ENCODE measurements at regions of chr7 and their contacts with region 1.

Region 1: GRCh38 chr7:100705753-100706671 is at the start of gene POP7:
- DNase-seq: peak; percentile 98
- ATAC-seq: peak; percentile 91
- H3K4me3 ChIP-seq: peak within 1 kb of the TSS; percentile 96
- H3K27ac ChIP-seq: peak within 1 kb of the TSS; percentile 58
- H3K4me1 ChIP-seq: peaks cover 9% of the 10 kb centered on the region
- H3K27me3 ChIP-seq: no peaks in the 10 kb centered on the region
- CTCF ChIP-seq: no peak
- total RNA-seq, gene POP7: 151 and 154 TPM in 2 replicates

Region 2: DNA sequence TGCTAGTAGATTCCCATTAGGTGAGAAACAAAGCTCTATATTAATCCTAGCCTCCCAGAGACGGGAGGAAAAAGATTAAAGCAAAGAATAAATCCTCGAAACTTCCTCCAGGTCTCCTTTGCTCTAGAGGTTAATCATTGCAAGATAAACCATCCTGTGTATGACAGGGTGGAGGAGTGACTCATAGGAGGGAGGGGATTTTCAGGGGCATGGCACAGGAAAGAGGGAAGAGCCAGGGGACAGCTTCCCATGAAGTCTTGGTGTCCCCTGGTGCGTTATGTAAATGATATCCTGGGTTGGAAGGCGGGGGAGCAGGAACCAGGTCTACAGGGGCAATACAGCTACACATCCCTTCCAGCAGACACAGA is 1027.0 kb before region 1 on chr7:
- CTCF ChIA-PET with region 1: no interaction called
- POLR2A ChIA-PET with region 1: no interaction called
- intact Hi-C with region 1: no loop called
- DNase-seq: peak; percentile 75
- ATAC-seq: peak; percentile 99
- H3K4me3 ChIP-seq: no peak overlapping the region
- H3K27ac ChIP-seq: no peak overlapping the region
- H3K4me1 ChIP-seq: peaks cover 11% of the 10 kb centered on the region
- H3K27me3 ChIP-seq: no peaks in the 10 kb centered on the region
- CTCF ChIP-seq: no peak

Region 3: DNA sequence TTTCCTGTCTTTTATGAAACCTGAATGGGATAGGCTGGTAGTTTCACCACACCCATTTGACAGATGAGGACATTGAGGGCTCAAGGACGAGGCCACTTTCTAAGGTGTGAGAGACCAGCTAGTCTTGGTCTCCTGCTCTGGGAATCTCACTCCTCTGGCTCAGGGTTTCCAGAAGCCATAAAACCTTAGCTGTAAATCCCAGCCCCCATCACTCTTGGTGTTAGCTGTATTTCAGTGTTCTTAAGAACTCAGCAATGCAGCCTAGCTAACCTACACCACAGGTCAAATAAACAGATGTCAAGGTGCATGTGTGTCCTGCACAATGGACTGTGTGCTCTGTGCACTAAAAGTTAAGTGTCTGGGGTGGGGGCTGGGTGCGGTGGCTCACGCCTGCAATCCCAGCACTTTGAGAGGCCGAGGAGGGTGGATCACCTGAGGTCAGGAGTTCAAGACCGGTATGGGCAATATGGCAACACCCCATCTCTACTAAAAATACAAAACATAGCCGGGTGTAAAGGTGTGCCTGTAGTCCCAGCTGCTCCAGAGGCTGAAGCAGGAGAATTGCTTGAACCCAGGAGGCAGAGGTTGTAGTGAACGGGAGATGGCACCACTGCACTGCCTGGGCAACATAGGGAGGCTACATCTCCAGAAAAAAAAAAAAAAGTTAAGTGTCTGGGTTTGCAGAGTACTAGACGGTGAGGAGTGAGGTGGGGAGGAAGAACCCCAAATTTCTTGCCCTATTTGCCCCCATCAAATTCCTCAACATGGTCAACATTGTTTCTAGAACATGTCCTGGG is 13.7 kb after region 1 on chr7:
- CTCF ChIA-PET with region 1: interaction called, 39 read pairs
- POLR2A ChIA-PET with region 1: no interaction called
- intact Hi-C with region 1: no loop called
- DNase-seq: peak; percentile 16
- ATAC-seq: peak; percentile 45; the same call in 1 of the 2 replicates
- H3K4me3 ChIP-seq: no peak overlapping the region
- H3K27ac ChIP-seq: no peak overlapping the region
- H3K4me1 ChIP-seq: no peaks in the 10 kb centered on the region
- H3K27me3 ChIP-seq: no peaks in the 10 kb centered on the region
- CTCF ChIP-seq: peak; percentile 32

Region 4: GRCh38 chr7:100763556-100764140 is 57.6 kb after region 1 on chr7:
- CTCF ChIA-PET with region 1: interaction called, 12 read pairs
- POLR2A ChIA-PET with region 1: no interaction called
- intact Hi-C with region 1: no loop called
- DNase-seq: no peak
- ATAC-seq: no peak
- H3K4me3 ChIP-seq: no peak overlapping the region
- H3K27ac ChIP-seq: no peak overlapping the region
- H3K4me1 ChIP-seq: no peaks in the 10 kb centered on the region
- H3K27me3 ChIP-seq: no peaks in the 10 kb centered on the region
- CTCF ChIP-seq: no peak

Region 5: DNA sequence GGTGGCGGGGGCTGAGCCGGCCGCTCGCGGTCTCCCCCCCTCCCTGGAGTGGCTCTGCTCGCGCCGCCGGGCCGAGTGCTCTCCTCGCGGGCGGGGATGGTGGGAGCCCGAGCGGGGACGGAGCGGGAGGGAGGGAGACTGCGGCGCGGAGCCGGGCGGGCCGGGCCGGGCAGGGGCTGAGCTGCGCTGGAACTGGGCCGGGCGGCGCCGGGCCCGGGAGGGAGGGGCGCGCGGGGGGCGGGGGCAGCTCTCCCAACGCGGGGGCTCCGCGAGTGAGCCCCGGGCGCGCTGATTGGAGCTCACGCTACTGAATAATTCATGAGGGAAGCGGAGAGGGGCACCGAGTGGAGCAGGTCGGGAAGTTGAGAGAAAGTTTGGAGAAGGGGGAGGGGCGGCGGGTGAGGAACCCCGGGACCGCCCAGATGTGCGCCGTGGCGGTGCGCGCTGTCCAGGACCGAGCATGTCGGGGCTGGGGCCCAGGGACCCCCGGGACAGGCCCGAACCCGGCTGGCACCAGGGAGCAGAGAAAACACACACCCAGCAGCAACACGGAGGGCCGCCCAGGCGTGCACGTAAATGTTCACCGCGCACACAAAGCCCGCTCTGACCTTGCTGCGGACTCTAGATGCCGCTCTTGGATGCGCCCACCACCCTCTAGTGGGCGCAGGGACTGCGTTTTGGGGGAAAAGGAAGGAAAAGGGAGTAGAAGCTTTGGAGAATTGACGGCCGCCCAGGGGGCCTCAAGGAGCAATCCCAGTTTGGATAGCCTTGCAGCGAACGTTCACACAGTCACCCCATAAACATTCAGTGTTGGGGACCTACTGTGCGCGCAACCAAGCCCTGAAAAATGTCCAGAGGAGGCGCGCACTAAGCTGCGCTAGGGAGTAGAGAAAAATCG is 121.6 kb after region 1 on chr7 and contains the start of gene EPHB4:
- CTCF ChIA-PET with region 1: interaction called, 10 read pairs
- POLR2A ChIA-PET with region 1: interaction called, 7 read pairs
- intact Hi-C with region 1: loop called (anchors 5 kb)
- DNase-seq: peak; percentile 84
- ATAC-seq: peak; percentile 79
- H3K4me3 ChIP-seq: peak within 1 kb of the TSS; percentile 99
- H3K27ac ChIP-seq: peak within 1 kb of the TSS; percentile 5; the same call in 1 of the 2 replicates
- H3K4me1 ChIP-seq: peaks cover 5% of the 10 kb centered on the region; the same call in 1 of the 2 replicates
- H3K27me3 ChIP-seq: no peaks in the 10 kb centered on the region
- CTCF ChIP-seq: peak; percentile 62
- total RNA-seq, gene EPHB4: 104 and 150 TPM in 2 replicates

Region 6: GRCh38 chr7:100874577-100875355 is 168.8 kb after region 1 on chr7 and contains the start of gene SRRT:
- CTCF ChIA-PET with region 1: no interaction called
- POLR2A ChIA-PET with region 1: interaction called, 21 read pairs
- intact Hi-C with region 1: no loop called
- DNase-seq: peak; percentile 97
- ATAC-seq: peak; percentile 97
- H3K4me3 ChIP-seq: peak within 1 kb of the TSS; percentile 78
- H3K27ac ChIP-seq: peak within 1 kb of the TSS; percentile 76
- H3K4me1 ChIP-seq: peaks cover 27% of the 10 kb centered on the region
- H3K27me3 ChIP-seq: no peaks in the 10 kb centered on the region
- CTCF ChIP-seq: no peak
- total RNA-seq, gene SRRT: 177 and 268 TPM in 2 replicates

Measured in PC-3 (cell line).